CD8-positive, alpha-beta T cell (primary cell): ENCODE measurements at regions of chr7 and their contacts with region 1.

Region 1: GRCh38 chr7:28149291-28150101 is 31.1 kb downstream of the JAZF1 start:
- DNase-seq: peak in 1 of 9 experiments; percentile 16
- ATAC-seq: no peak
- H3K4me3 ChIP-seq: no peak overlapping the region
- H3K4me3 Mint-ChIP-seq: no peak overlapping the region
- H3K27ac ChIP-seq: no peak overlapping the region
- H3K27ac Mint-ChIP-seq: no peak overlapping the region
- H3K4me1 ChIP-seq: peaks cover 4% of the 10 kb centered on the region
- H3K4me1 Mint-ChIP-seq: peaks cover 17% of the 10 kb centered on the region
- H3K27me3 ChIP-seq: no peaks in the 10 kb centered on the region
- H3K27me3 Mint-ChIP-seq: no peaks in the 10 kb centered on the region
- CTCF ChIP-seq: no peak

Region 2: DNA sequence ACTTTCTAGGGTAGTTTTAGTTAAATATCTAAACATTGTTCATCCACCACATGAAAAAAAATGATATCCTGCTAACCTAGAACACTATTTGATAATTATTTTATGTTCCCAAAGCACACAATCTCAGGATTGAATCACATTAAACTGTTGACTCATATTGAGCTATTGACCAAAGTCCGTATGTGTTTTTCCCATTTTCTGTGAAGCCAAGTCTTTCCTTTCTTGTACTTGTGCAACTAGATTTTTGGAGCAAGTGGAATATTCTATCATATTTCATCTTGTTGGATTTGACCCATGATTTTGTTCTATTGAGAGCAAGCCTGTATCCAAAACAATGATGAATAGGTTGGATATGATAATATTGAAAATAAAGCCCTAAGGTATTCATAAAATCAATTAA is 1449.7 kb before region 1 on chr7:
- CTCF ChIA-PET with region 1: no interaction called
- POLR2A ChIA-PET with region 1: no interaction called
- intact Hi-C with region 1: loop called in 1 of 2 experiments (anchors 5 kb)
- DNase-seq: no peak
- ATAC-seq: no peak
- H3K4me3 ChIP-seq: no peak overlapping the region
- H3K4me3 Mint-ChIP-seq: no peak overlapping the region
- H3K27ac ChIP-seq: no peak overlapping the region
- H3K27ac Mint-ChIP-seq: no peak overlapping the region
- H3K4me1 ChIP-seq: no peaks in the 10 kb centered on the region
- H3K4me1 Mint-ChIP-seq: no peaks in the 10 kb centered on the region
- H3K27me3 ChIP-seq: no peaks in the 10 kb centered on the region
- H3K27me3 Mint-ChIP-seq: peaks cover 7% of the 10 kb centered on the region
- CTCF ChIP-seq: no peak

Region 3: DNA sequence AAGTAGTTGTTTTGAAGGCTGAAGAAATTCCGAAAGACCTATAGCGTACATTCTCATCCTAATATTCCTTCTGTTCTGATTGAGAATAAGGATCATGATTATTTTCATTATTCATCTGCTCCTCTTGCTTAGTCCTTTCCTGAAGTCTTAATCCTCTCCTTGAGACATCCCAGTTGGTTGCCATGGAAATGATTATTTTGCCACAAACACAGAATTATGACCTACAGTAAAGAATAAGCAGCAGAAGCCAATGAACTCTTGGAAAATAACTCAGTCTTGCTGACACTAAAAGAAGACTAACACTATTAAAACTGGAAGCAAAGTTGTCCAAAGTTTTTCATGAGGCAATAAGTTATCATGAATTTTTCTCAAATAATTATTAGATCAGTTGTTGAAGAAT is 78.9 kb after region 1 on chr7:
- CTCF ChIA-PET with region 1: no interaction called
- POLR2A ChIA-PET with region 1: no interaction called
- intact Hi-C with region 1: no loop called
- DNase-seq: no peak
- ATAC-seq: no peak
- H3K4me3 ChIP-seq: no peak overlapping the region
- H3K4me3 Mint-ChIP-seq: no peak overlapping the region
- H3K27ac ChIP-seq: no peak overlapping the region
- H3K27ac Mint-ChIP-seq: no peak overlapping the region
- H3K4me1 ChIP-seq: no peaks in the 10 kb centered on the region
- H3K4me1 Mint-ChIP-seq: no peaks in the 10 kb centered on the region
- H3K27me3 ChIP-seq: no peaks in the 10 kb centered on the region
- H3K27me3 Mint-ChIP-seq: peaks cover 2% of the 10 kb centered on the region
- CTCF ChIP-seq: no peak

Region 4: DNA sequence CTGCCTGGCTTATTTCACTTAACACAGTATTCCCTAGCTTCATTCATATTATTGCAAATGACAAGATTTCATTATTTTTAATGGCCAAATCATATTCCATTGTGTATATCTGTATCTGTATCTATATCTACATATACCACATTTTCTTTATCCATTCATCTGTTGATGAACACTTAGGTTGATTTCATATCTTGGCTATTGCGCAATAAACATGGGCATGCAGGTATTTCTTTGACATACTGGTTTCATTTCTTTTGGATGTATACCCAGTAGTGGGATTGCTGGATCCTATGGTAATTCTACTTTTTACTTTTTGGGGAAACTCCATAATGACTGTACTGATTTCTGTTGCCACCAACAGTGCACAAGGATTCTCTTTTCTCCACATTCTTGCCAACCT is 194.0 kb after region 1 on chr7:
- CTCF ChIA-PET with region 1: no interaction called
- POLR2A ChIA-PET with region 1: no interaction called
- intact Hi-C with region 1: no loop called
- DNase-seq: no peak
- ATAC-seq: no peak
- H3K4me3 ChIP-seq: no peak overlapping the region
- H3K4me3 Mint-ChIP-seq: no peak overlapping the region
- H3K27ac ChIP-seq: no peak overlapping the region
- H3K27ac Mint-ChIP-seq: no peak overlapping the region
- H3K4me1 ChIP-seq: no peaks in the 10 kb centered on the region
- H3K4me1 Mint-ChIP-seq: no peaks in the 10 kb centered on the region
- H3K27me3 ChIP-seq: no peaks in the 10 kb centered on the region
- H3K27me3 Mint-ChIP-seq: peaks cover 7% of the 10 kb centered on the region
- CTCF ChIP-seq: no peak